Heart left ventricle (tissue), 16 donors: ENCODE measurements at regions of chr6 and their contacts with region 1.

Region 1: DNA sequence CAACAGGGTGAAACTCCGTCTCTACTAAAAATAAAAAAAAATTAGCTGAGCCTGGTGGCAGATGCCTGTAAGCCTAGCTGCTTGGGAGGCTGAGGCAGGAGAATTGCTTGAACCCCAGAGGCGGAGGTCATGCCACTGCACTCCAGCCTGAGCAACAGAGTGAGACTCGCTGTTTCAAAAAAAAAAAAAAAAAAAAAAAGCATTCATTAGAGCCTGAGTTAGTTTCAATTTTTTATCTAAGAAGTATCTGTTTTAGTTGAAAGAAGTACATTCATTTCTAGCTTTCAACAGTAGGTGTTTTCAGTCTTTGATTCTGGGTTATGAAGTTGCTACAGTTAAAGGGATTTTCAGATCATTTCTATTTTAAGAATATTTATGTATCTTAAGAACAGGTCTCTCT is 42.2 kb downstream of the ZNF292 start:
- DNase-seq: no peak
- ATAC-seq: no peak
- H3K4me3 ChIP-seq: no peak overlapping the region
- H3K27ac ChIP-seq: no peak overlapping the region
- H3K4me1 ChIP-seq: peaks cover 0 to 44% (median 21%) of the 10 kb centered on the region in 12 donors
- H3K27me3 ChIP-seq: no peaks in the 10 kb centered on the region
- CTCF ChIP-seq: no peak
- POLR2A ChIP-seq: no peak

Region 2: DNA sequence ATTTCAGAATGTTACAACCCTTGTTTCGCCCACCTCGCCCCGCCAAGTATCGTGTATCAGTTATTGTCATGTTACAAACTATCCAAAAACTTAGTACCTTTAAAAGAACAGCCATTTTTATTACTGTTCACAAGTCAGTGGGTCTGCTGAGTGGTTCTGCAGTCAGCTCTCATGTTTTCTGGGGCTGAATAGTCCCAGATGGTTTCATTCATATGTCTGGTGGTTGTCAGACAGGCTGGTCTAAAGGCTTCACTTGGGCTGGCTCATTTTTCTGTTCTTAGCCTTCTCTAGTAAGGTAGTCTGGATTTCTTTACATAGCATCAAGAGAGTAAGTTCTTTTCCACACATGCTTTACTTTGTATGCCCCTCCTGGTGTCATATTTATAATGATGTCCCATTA is 33.5 kb before region 1 on chr6:
- intact Hi-C with region 1: loop called in 1 of 10 experiments (anchors 5 kb)
- DNase-seq: no peak
- ATAC-seq: peak in 1 of 4 donors; percentile 24
- H3K4me3 ChIP-seq: no peak overlapping the region
- H3K27ac ChIP-seq: no peak overlapping the region
- H3K4me1 ChIP-seq: peaks cover 0 to 53% (median 32%) of the 10 kb centered on the region in 12 donors
- H3K27me3 ChIP-seq: no peaks in the 10 kb centered on the region
- CTCF ChIP-seq: no peak
- POLR2A ChIP-seq: no peak